Esophagus muscularis mucosa (tissue), 4 donors: ENCODE measurements at regions of chr12 and their contacts with region 1.

Region 1: GRCh38 chr12:69470189-69471075 is at the start of gene FRS2:
- DNase-seq: peak; percentile 97
- H3K4me3 ChIP-seq: peak within 1 kb of the TSS; percentile 93 to 99 (median 95)
- H3K27ac ChIP-seq: peak within 1 kb of the TSS; percentile 94 to 96 (median 96)
- H3K4me1 ChIP-seq: peaks cover 43 to 52% (median 51%) of the 10 kb centered on the region in 4 donors
- H3K27me3 ChIP-seq: no peaks in the 10 kb centered on the region
- CTCF ChIP-seq: peak; percentile 41 to 48 (median 42)
- EP300 ChIP-seq: no peak
- POLR2A ChIP-seq: peak; percentile 54
- total RNA-seq, gene FRS2: 36.5 to 60.3 (median 43.8) TPM

Region 2: DNA sequence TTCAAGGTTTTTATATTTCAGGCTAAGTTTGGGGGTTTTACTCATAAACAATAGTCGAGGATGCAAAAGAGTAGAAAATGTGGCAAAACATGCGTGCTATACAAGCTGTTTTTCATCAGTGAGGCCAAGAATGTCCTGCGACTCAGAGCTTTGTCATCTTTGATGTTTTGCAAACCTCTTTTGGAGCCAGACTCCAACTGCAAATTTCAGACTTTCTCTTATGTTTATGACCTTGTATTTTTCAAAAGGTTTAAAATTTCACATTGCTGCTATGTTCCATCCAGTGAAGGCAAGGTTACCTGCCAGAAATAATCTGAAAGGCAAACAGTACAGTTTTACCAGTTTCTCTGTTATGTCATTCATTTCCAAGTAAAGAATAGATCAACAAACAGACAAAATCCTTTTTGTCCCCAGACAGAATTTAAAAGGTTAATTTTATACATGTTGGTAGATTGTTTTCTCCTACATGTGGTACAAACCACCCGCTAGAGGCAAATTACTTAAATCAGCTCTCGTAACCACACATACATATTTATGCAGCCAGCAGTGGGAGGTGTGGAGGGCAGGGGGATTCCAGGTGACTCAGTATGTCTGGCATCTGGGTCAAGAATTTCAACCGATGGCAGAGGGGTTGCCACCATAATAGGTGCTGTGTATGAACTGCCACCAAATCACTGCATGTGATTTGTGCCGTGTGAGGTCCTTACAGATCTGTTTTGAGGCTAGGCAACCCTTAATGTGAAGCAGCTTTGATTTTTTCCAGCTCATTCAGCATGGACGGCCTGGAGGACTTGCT is 417.6 kb before region 1 on chr12:
- intact Hi-C with region 1: no loop called
- DNase-seq: no peak
- H3K4me3 ChIP-seq: no peak overlapping the region
- H3K27ac ChIP-seq: peak overlapping the region in 1 of 4 donors; percentile 11
- H3K4me1 ChIP-seq: peaks cover 0 to 19% (median 12%) of the 10 kb centered on the region in 4 donors
- H3K27me3 ChIP-seq: no peaks in the 10 kb centered on the region
- CTCF ChIP-seq: no peak
- EP300 ChIP-seq: no peak
- POLR2A ChIP-seq: no peak

Region 3: GRCh38 chr12:69359531-69360347 is 110.7 kb before region 1 on chr12 and contains the start of gene YEATS4:
- intact Hi-C with region 1: loop called (anchors 10 kb)
- DNase-seq: peak; percentile 96
- H3K4me3 ChIP-seq: peak within 1 kb of the TSS; percentile 75 to 91 (median 80)
- H3K27ac ChIP-seq: peak within 1 kb of the TSS; percentile 94 to 98 (median 96)
- H3K4me1 ChIP-seq: peaks cover 11 to 32% (median 25%) of the 10 kb centered on the region in 4 donors
- H3K27me3 ChIP-seq: no peaks in the 10 kb centered on the region
- CTCF ChIP-seq: peak in 1 of 3 experiments; percentile 12
- EP300 ChIP-seq: no peak
- POLR2A ChIP-seq: peak; percentile 16
- total RNA-seq, gene YEATS4: 5.7 to 17.6 (median 11.5) TPM

Region 4: GRCh38 chr12:69415471-69416275 is 54.8 kb before region 1 on chr12:
- intact Hi-C with region 1: loop called (anchors 5 kb)
- DNase-seq: no peak
- H3K4me3 ChIP-seq: peak overlapping the region in 3 of 4 donors; percentile 11 to 20 (median 17)
- H3K27ac ChIP-seq: peak overlapping the region; percentile 34 to 59 (median 42)
- H3K4me1 ChIP-seq: peaks cover 10 to 15% (median 12%) of the 10 kb centered on the region in 4 donors
- H3K27me3 ChIP-seq: no peaks in the 10 kb centered on the region
- CTCF ChIP-seq: peak; percentile 73 to 85 (median 85)
- EP300 ChIP-seq: no peak
- POLR2A ChIP-seq: no peak

Region 5: GRCh38 chr12:69534389-69534822 is 64.0 kb after region 1 on chr12:
- intact Hi-C with region 1: loop called (anchors 10 kb)
- DNase-seq: peak; percentile 92
- H3K4me3 ChIP-seq: peak overlapping the region in 3 of 4 donors; percentile 18 to 31 (median 24)
- H3K27ac ChIP-seq: peak overlapping the region; percentile 63 to 76 (median 68)
- H3K4me1 ChIP-seq: peaks cover 10 to 30% (median 26%) of the 10 kb centered on the region in 4 donors
- H3K27me3 ChIP-seq: no peaks in the 10 kb centered on the region
- CTCF ChIP-seq: no peak
- EP300 ChIP-seq: no peak
- POLR2A ChIP-seq: no peak

Region 6: GRCh38 chr12:69570545-69571399 is 100.3 kb after region 1 on chr12:
- intact Hi-C with region 1: loop called (anchors 5 kb)
- DNase-seq: no peak
- H3K4me3 ChIP-seq: no peak overlapping the region
- H3K27ac ChIP-seq: no peak overlapping the region
- H3K4me1 ChIP-seq: peaks cover 0 to 5% (median 0%) of the 10 kb centered on the region in 4 donors
- H3K27me3 ChIP-seq: no peaks in the 10 kb centered on the region
- CTCF ChIP-seq: peak; percentile 75 to 85 (median 84)
- EP300 ChIP-seq: no peak
- POLR2A ChIP-seq: no peak